PC-3 (cell line): ENCODE measurements at regions of chr2 and their contacts with region 1.

Region 1: GRCh38 chr2:194698012-194698411 is 959.0 kb upstream of the SLC39A10 start:
- DNase-seq: peak; percentile 2
- ATAC-seq: peak; percentile 23
- H3K4me3 ChIP-seq: no peak overlapping the region
- H3K27ac ChIP-seq: peak overlapping the region; percentile 69
- H3K4me1 ChIP-seq: peaks cover 37% of the 10 kb centered on the region
- H3K27me3 ChIP-seq: no peaks in the 10 kb centered on the region
- CTCF ChIP-seq: no peak

Region 2: DNA sequence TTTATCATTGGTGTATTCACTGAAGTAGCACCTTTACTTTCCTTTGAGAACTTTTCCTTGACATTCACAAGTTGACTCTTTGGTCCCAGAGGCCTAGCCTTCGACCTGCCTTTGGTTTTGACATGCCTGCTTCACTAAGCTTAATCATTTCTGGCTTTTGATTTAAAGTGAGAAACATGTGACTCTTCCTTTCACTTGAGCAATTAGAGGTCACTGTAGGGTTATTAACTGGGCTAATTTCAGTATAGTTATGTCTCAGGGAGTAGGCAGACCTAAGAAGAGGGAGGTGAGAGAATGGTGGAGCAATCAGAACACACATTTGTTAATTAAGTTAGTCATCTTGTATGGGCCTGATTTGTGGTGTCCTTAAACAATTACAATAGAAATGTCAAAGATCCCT is 81.7 kb before region 1 on chr2:
- CTCF ChIA-PET with region 1: no interaction called
- POLR2A ChIA-PET with region 1: no interaction called
- intact Hi-C with region 1: loop called (anchors 2 kb)
- DNase-seq: no peak
- ATAC-seq: no peak
- H3K4me3 ChIP-seq: no peak overlapping the region
- H3K27ac ChIP-seq: no peak overlapping the region
- H3K4me1 ChIP-seq: no peaks in the 10 kb centered on the region
- H3K27me3 ChIP-seq: no peaks in the 10 kb centered on the region
- CTCF ChIP-seq: no peak

Region 3: DNA sequence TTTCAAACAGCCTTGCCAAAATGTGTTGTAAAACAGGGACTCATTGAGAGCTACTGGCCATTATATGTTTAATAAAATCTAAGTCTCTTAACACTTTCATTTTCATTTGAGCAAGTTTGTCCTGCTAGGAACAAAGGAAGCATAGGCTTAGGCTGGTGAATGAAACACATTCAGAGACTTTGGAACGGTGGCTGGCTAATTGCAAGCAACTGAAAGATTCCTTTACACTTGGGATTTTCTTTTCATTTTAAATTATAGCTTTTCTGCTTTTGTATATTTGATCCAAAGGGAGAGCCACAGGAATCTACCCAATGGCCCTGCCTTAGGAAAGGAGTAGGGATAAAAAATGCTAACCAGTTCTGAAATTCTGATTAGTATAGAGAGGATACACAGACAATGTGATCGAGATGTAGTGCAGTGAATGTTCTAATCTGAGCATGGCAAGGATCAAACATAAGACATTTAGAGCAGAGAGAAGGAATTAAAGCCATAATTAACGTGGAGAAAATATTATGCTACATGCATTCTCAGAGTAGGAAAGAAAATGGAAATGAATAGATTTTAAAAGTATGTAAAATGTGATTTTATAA is 47.6 kb after region 1 on chr2:
- CTCF ChIA-PET with region 1: no interaction called
- POLR2A ChIA-PET with region 1: no interaction called
- intact Hi-C with region 1: loop called (anchors 2 kb)
- DNase-seq: no peak
- ATAC-seq: no peak
- H3K4me3 ChIP-seq: no peak overlapping the region
- H3K27ac ChIP-seq: no peak overlapping the region
- H3K4me1 ChIP-seq: no peaks in the 10 kb centered on the region
- H3K27me3 ChIP-seq: no peaks in the 10 kb centered on the region
- CTCF ChIP-seq: no peak